ENCODE measurements at regions of chr3 and their contacts with region 1.

Region 1: GRCh38 chr3:57597122-57597923 is at the start of gene ARF4:
- DNase-seq: peak; percentile 99 to 100
- H3K4me3 ChIP-seq: peak within 1 kb of the TSS; percentile 80 to 95
- H3K27ac ChIP-seq: peak within 1 kb of the TSS; percentile 96 to 99
- H3K4me1 ChIP-seq: peaks cover 0 to 29% of the 10 kb centered on the region in 2 donors
- H3K27me3 ChIP-seq: no peaks in the 10 kb centered on the region
- CTCF ChIP-seq: peak in 1 of 3 experiments; percentile 27
- total RNA-seq, gene ARF4: 50.0 TPM

Region 2: GRCh38 chr3:56682462-56683121 is 914.7 kb before region 1 on chr3:
- intact Hi-C with region 1: loop called (anchors 5 kb)
- DNase-seq: peak in 1 of 2 donors; percentile 82
- H3K4me3 ChIP-seq: peak overlapping the region; percentile 74 to 82
- H3K27ac ChIP-seq: peak overlapping the region; percentile 95 to 99
- H3K4me1 ChIP-seq: peaks cover 0 to 3% of the 10 kb centered on the region in 2 donors
- H3K27me3 ChIP-seq: no peaks in the 10 kb centered on the region
- CTCF ChIP-seq: no peak

Region 3: GRCh38 chr3:57164657-57165573 is 432.4 kb before region 1 on chr3 and contains the start of gene IL17RD:
- intact Hi-C with region 1: loop called (anchors 2 kb)
- DNase-seq: peak in 1 of 2 donors; percentile 86
- H3K4me3 ChIP-seq: peak within 1 kb of the TSS; percentile 92 to 95
- H3K27ac ChIP-seq: peak within 1 kb of the TSS in 1 of 2 donors; percentile 16
- H3K4me1 ChIP-seq: peaks cover 4 to 6% of the 10 kb centered on the region in 2 donors
- H3K27me3 ChIP-seq: no peaks in the 10 kb centered on the region
- CTCF ChIP-seq: no peak
- total RNA-seq, gene IL17RD: 3.4 TPM

Region 4: DNA sequence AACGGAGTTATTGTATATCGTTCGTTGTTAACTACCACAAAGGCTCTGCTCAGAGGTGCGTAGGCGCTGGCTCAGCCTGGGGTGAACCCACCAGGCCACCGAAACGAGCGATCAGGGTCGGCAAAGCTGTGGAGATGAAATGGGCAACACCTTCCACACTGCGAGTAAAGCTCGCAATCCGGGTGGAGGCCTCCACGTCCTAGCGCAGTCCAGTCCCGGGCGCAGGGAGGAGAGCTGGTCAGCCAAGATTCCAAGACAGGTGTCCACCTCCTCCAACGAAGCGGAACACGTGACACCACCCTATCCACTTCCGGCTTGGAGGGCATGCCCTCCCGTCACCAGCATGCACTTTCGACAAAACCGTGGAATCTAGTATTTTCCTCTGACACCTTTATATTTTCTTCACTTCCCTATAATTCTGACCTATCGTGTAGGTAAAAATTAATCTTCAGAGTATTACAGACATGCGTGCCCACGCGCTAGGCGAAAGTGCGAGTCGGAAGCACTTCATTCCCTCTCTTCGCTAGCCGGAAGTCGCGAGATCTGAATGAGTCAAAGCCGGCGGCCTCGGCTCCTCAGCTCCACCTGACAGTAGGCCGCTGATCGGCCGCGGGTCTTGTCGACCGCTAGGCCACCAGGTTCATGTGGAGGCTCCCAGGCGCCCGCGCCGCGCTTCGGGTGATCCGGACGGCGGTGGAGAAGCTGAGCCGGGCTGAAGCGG is 41.4 kb before region 1 on chr3 and contains the start of gene PDE12:
- intact Hi-C with region 1: loop called (anchors 1 kb)
- DNase-seq: peak; percentile 49 to 95
- H3K4me3 ChIP-seq: peak within 1 kb of the TSS; percentile 90
- H3K27ac ChIP-seq: peak within 1 kb of the TSS; percentile 88 to 90
- H3K4me1 ChIP-seq: peaks cover 3 to 18% of the 10 kb centered on the region in 2 donors
- H3K27me3 ChIP-seq: no peaks in the 10 kb centered on the region
- CTCF ChIP-seq: no peak
- total RNA-seq, gene PDE12: 3.0 TPM

Region 5: GRCh38 chr3:57692259-57693147 is 95.2 kb after region 1 on chr3 and contains the start of gene DENND6A:
- intact Hi-C with region 1: loop called (anchors 1 kb)
- DNase-seq: peak; percentile 79 to 91
- H3K4me3 ChIP-seq: peak within 1 kb of the TSS; percentile 78 to 87
- H3K27ac ChIP-seq: peak within 1 kb of the TSS; percentile 97 to 98
- H3K4me1 ChIP-seq: peaks cover 7 to 30% of the 10 kb centered on the region in 2 donors
- H3K27me3 ChIP-seq: no peaks in the 10 kb centered on the region
- CTCF ChIP-seq: no peak
- total RNA-seq, gene DENND6A: 11.6 TPM

Region 6: DNA sequence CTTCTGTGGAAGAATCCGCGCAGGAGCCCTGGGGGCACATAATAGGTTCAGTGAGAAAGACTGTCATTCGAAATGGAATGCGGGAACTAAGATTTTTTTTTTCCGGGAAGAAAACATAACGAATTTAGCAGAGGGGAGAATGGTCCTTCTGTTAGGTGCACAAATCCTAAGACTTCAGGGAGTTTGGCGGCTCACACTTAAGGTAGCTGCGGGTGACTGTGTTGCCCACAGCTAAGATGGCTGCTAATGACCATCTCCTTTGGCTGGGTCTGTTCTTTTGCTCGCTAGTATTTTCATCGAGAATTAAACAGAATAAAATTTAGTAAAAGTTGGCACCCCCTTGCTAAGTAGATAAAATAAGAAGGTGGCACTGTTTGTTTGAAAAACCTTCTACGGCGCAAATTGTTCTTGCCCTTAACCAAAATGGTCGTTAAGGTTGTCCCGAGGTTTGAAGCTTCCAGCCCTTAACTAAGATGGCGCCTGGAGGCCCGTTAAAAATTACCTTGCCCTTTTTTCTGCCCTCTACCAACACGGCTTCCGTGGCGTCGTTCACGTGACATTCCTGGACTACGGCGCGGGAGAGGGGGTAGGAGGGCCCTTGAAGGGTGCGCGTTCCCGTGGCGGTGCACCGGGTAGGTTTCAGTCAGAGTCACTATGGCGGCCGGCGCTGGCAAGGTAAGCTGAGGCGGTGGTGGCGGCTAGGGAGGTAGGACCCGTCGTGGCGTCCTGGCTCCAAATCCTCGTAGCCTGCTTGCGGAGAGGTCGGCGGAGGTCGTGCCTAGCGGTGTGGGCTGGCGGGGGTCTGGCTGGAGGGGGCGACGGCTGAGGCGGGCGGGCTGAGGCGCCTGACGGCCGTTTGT is 158.6 kb after region 1 on chr3 and contains the start of gene SLMAP:
- intact Hi-C with region 1: loop called (anchors 1 kb)
- DNase-seq: peak; percentile 92 to 98
- H3K4me3 ChIP-seq: peak within 1 kb of the TSS; percentile 89 to 90
- H3K27ac ChIP-seq: peak within 1 kb of the TSS; percentile 87
- H3K4me1 ChIP-seq: peaks cover 16 to 19% of the 10 kb centered on the region in 2 donors
- H3K27me3 ChIP-seq: no peaks in the 10 kb centered on the region
- CTCF ChIP-seq: no peak
- total RNA-seq, gene SLMAP: 502 TPM

Region 7: GRCh38 chr3:58491506-58492402 is 894.4 kb after region 1 on chr3 and contains the start of gene KCTD6:
- intact Hi-C with region 1: loop called (anchors 2 kb)
- DNase-seq: peak; percentile 65 to 96
- H3K4me3 ChIP-seq: peak within 1 kb of the TSS; percentile 96 to 98
- H3K27ac ChIP-seq: peak within 1 kb of the TSS; percentile 81 to 92
- H3K4me1 ChIP-seq: peaks cover 5 to 37% of the 10 kb centered on the region in 2 donors
- H3K27me3 ChIP-seq: no peaks in the 10 kb centered on the region
- CTCF ChIP-seq: peak; percentile 58 to 86 (median 64)
- total RNA-seq, gene KCTD6: 6.6 TPM